Sigmoid colon (tissue), 7 donors: ENCODE measurements at regions of chr9 and their contacts with region 1.

Region 1: GRCh38 chr9:115524453-115525059 is 406.6 kb upstream of the TNC start:
- DNase-seq: no peak
- H3K4me3 ChIP-seq: no peak overlapping the region
- H3K27ac ChIP-seq: peak overlapping the region in 3 of 4 donors; percentile 71 to 79 (median 73)
- H3K4me1 ChIP-seq: peaks cover 0 to 58% (median 41%) of the 10 kb centered on the region in 4 donors
- H3K27me3 ChIP-seq: no peaks in the 10 kb centered on the region
- CTCF ChIP-seq: peak; percentile 66 to 86 (median 78)
- EP300 ChIP-seq: no peak
- POLR2A ChIP-seq: no peak

Region 2: GRCh38 chr9:114681594-114682332 is 842.8 kb before region 1 on chr9 and contains the start of gene TEX48:
- intact Hi-C with region 1: loop called (anchors 5 kb)
- DNase-seq: peak; percentile 71
- H3K4me3 ChIP-seq: no peak within 1 kb of the TSS
- H3K27ac ChIP-seq: no peak within 1 kb of the TSS
- H3K4me1 ChIP-seq: peaks cover 0 to 14% (median 10%) of the 10 kb centered on the region in 4 donors
- H3K27me3 ChIP-seq: no peaks in the 10 kb centered on the region
- CTCF ChIP-seq: peak in 3 of 4 experiments; percentile 35 to 45 (median 35)
- EP300 ChIP-seq: no peak
- POLR2A ChIP-seq: no peak
- total RNA-seq, gene TEX48: not detected

Region 3: DNA sequence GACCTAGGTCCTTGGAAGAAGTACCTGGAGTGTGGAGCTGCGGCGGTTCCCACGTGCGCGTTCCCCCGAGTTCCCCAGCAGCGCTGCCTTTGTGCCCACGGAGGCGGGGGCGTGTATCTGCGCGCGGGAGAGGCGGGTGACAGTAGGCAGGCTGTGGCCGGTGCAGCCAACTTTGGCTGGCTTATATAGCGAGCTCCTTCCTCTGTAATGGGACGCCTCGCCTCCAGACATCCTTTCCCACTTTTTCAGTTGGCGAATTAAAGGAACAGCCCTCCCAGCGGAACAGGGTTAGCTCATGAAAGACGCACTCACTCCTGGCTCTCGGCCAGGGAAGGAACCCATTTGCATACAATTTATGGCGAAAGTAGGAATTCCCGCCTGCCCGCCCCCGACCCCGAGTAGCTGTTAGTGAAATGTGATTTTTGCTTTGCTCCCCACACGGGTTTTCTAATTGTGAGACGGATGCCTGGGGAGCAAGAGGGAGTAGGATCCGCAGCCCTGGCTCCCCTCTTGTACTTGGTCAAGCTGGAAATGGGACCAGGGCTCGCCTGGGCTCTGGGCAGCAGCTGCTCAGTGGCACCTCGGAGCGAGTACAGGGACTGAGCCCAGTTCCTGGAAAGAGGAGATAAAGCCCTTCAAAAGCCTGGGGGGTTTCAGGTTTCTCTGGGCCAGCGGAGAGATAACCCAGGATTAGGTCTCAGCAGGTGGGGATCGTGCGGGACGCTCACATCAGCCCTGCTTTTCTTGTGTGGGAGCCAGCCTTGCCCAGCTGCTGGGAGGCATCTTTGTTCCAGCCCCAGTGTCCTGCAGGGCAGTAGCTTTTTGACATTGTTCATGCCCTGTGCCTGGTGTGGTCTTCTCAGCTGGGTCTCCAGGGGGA is 406.3 kb before region 1 on chr9 and contains the start of gene TNC:
- intact Hi-C with region 1: loop called (anchors 10 kb)
- DNase-seq: peak; percentile 94
- H3K4me3 ChIP-seq: peak within 1 kb of the TSS; percentile 28 to 61 (median 56)
- H3K27ac ChIP-seq: peak within 1 kb of the TSS; percentile 88 to 97 (median 96)
- H3K4me1 ChIP-seq: peaks cover 0 to 49% (median 42%) of the 10 kb centered on the region in 4 donors
- H3K27me3 ChIP-seq: no peaks in the 10 kb centered on the region
- CTCF ChIP-seq: no peak
- EP300 ChIP-seq: peak in 2 of 4 donors; percentile 63 to 85
- POLR2A ChIP-seq: peak; percentile 63 to 93
- total RNA-seq, gene TNC: 127 to 742 (median 590) TPM

Region 4: DNA sequence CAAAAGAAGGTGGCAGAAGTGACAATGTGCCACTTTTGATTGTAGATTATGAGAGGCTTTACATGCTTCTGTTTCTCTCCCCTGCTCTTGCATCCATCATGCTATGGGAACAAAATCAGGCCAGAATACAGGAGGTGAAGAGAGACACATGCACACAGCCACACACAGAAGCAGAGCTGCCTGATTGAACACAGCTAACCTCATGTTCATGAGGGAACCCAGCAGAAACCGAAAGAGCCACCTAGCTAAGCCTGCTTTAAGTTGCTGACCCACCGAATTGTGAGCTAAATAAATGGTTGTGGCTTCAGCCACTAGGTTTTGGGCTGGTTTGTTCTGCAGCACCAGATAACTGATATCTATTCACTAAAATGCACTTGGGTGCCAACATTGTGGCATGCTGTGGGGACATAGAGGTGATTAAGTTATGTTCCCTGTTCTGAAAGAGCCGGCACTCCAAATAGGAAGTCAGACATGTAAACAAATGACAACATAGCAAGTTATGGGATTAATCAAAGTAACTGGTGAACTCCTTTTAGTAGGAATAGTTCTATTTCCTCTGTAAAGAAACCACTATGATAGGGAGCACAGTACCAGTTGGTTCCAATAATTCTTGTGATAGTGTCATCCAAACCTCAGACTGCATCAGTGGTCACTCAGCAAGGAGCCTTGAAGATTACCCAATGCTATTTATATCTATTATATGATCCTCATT is 313.0 kb before region 1 on chr9:
- intact Hi-C with region 1: loop called (anchors 5 kb)
- DNase-seq: no peak
- H3K4me3 ChIP-seq: no peak overlapping the region
- H3K27ac ChIP-seq: peak overlapping the region in 3 of 4 donors; percentile 37 to 77 (median 44)
- H3K4me1 ChIP-seq: peaks cover 0 to 44% (median 32%) of the 10 kb centered on the region in 4 donors
- H3K27me3 ChIP-seq: no peaks in the 10 kb centered on the region
- CTCF ChIP-seq: no peak
- EP300 ChIP-seq: no peak
- POLR2A ChIP-seq: no peak